ENCODE measurements at regions of chrX and their contacts with region 1.

Region 1: DNA sequence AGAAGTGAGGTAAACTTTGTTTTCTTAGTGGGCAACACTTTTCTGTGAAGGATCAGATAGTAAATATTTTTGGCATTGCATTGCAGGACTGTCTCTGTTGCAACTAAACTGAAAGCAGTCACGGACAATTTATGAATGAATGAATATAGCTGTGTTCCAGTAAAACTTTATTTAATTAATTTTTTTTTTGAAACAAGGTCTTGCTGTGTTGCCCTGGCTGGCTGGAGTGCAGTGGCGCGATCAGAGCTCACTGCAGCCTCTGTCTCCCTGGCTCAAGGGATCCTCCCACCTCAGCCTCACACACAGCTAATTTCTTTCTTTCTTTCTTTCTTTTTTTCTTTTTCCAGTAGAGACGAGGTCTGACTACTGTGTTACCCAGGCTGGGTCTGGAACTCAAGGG is 15.8 kb downstream of the RBM10 start:
- DNase-seq: no peak
- H3K4me3 Mint-ChIP-seq: no peak overlapping the region
- H3K27ac Mint-ChIP-seq: no peak overlapping the region
- H3K4me1 Mint-ChIP-seq: no peaks in the 10 kb centered on the region
- H3K27me3 Mint-ChIP-seq: no peaks in the 10 kb centered on the region

Region 2: DNA sequence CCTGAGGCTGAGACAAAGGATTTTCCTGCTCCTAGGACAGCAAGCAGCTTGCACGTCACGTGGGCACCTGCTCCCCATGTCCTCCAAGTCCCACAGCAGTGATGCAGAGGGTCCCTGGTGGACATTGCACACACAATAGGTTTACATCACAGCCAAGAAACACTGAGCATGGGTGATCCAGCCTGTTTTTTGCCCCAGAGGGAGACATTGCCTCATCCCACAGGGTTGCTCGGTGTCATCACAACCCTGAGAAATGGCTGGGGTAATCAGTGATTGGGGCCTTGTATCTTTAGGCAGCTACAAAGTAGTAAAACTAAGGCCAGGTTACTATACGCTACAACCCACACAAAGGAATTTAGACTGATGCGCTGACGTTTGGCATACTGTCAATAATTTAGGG is 35.7 kb before region 1 on chrX:
- intact Hi-C with region 1: no loop called
- DNase-seq: no peak
- H3K4me3 Mint-ChIP-seq: no peak overlapping the region
- H3K27ac Mint-ChIP-seq: no peak overlapping the region
- H3K4me1 Mint-ChIP-seq: peaks cover 2% of the 10 kb centered on the region
- H3K27me3 Mint-ChIP-seq: no peaks in the 10 kb centered on the region

Region 3: DNA sequence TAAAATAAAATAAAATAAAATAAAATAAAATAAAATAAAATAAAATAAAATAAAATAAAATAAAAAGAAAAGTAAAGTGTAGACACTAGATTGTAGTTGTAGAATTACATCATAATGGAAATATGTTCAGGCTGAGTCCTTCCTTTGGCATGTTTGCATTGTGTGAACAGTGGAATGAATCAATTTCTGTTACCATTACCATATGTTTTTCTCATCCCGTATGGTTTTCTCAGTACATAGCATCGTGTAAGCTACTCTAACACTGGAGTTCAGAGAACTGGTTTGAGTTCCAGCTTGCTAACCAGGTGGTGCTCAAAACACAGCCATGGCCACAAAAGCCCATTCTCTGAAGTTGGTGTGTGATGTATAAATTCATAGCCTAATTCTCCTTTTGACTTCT is 117.9 kb after region 1 on chrX:
- intact Hi-C with region 1: loop called (anchors 5 kb)
- DNase-seq: no peak
- H3K4me3 Mint-ChIP-seq: no peak overlapping the region
- H3K27ac Mint-ChIP-seq: no peak overlapping the region
- H3K4me1 Mint-ChIP-seq: no peaks in the 10 kb centered on the region
- H3K27me3 Mint-ChIP-seq: no peaks in the 10 kb centered on the region

Measured in activated T-helper 2 cell treated with anti-CD3 and anti-CD28 coated beads, Interferon-gamma antibody, Interleukin-2, Interleukin-4, amounts not matched to agents 10 μg/mL and 5 μg/mL and 100 μg/mL, durations not matched to agents 14 hours and 24 hours and 36 hours (primary cell).